ENCODE measurements at regions of chr19 and their contacts with region 1.

Region 1: GRCh38 chr19:10580979-10581631 is 6.0 kb downstream of the AP1M2 start:
- DNase-seq: peak; percentile 95
- ATAC-seq: peak; percentile 92
- H3K4me3 Mint-ChIP-seq: no peak overlapping the region
- H3K27ac Mint-ChIP-seq: no peak overlapping the region
- H3K4me1 Mint-ChIP-seq: peaks cover 32% of the 10 kb centered on the region
- H3K27me3 Mint-ChIP-seq: no peaks in the 10 kb centered on the region

Region 2: GRCh38 chr19:10517760-10518443 is 63.2 kb before region 1 on chr19:
- CTCF ChIA-PET with region 1: no interaction called
- POLR2A ChIA-PET with region 1: no interaction called
- DNase-seq: no peak
- ATAC-seq: peak; percentile 32
- H3K4me3 Mint-ChIP-seq: peak overlapping the region; percentile 53
- H3K27ac Mint-ChIP-seq: no peak overlapping the region
- H3K4me1 Mint-ChIP-seq: peaks cover 44% of the 10 kb centered on the region
- H3K27me3 Mint-ChIP-seq: peaks cover 53% of the 10 kb centered on the region

Region 3: GRCh38 chr19:10593820-10594637 is 12.9 kb after region 1 on chr19:
- CTCF ChIA-PET with region 1: interaction called, 70 read pairs
- POLR2A ChIA-PET with region 1: interaction called, 4 read pairs
- DNase-seq: no peak
- ATAC-seq: no peak
- H3K4me3 Mint-ChIP-seq: no peak overlapping the region
- H3K27ac Mint-ChIP-seq: peak overlapping the region; percentile 76
- H3K4me1 Mint-ChIP-seq: peaks cover 25% of the 10 kb centered on the region
- H3K27me3 Mint-ChIP-seq: peaks cover 2% of the 10 kb centered on the region

Region 4: DNA sequence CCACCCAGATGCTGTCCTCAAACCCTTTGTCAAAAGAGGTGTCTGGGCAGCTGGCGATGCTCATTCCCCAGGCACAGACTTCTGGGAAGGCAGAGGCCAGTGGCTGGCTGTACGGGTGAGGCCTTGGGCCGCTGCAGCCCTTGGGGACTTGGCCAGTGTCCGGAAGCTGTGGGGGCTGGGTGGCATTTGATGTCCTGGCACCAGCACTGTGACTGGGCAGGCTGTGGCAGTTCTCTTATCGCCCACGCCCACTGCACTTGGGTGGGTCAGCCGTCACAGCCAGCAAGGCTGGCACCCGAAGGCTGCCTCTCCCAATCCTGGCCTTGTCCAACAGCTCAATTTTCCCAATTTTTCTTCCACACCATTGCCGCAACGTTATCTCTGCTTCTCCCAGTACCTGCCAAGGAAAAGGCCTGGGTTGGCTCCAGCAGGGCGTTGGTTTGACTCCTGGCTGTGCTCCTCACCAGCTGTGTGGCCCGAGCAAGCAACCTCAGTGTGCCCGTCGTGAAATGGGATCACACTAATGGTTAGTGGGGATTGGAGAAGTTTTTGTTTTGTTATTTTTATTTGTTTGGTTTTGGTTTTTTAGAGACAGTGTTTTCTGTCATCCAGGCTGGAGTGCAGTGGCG is 31.5 kb after region 1 on chr19:
- CTCF ChIA-PET with region 1: interaction called, 14 read pairs
- POLR2A ChIA-PET with region 1: interaction called, 3 read pairs
- DNase-seq: no peak
- ATAC-seq: no peak
- H3K4me3 Mint-ChIP-seq: no peak overlapping the region
- H3K27ac Mint-ChIP-seq: peak overlapping the region; percentile 55
- H3K4me1 Mint-ChIP-seq: peaks cover 26% of the 10 kb centered on the region
- H3K27me3 Mint-ChIP-seq: no peaks in the 10 kb centered on the region

Region 5: GRCh38 chr19:10644260-10645007 is 63.3 kb after region 1 on chr19:
- CTCF ChIA-PET with region 1: interaction called, 421 read pairs
- POLR2A ChIA-PET with region 1: interaction called, 21 read pairs
- DNase-seq: peak; percentile 90
- ATAC-seq: peak; percentile 90
- H3K4me3 Mint-ChIP-seq: no peak overlapping the region
- H3K27ac Mint-ChIP-seq: peak overlapping the region; percentile 89
- H3K4me1 Mint-ChIP-seq: peaks cover 37% of the 10 kb centered on the region
- H3K27me3 Mint-ChIP-seq: no peaks in the 10 kb centered on the region

Region 6: GRCh38 chr19:10662384-10663251 is 81.5 kb after region 1 on chr19:
- CTCF ChIA-PET with region 1: interaction called, 11 read pairs
- POLR2A ChIA-PET with region 1: no interaction called
- DNase-seq: no peak
- ATAC-seq: no peak
- H3K4me3 Mint-ChIP-seq: no peak overlapping the region
- H3K27ac Mint-ChIP-seq: peak overlapping the region; percentile 69
- H3K4me1 Mint-ChIP-seq: peaks cover 48% of the 10 kb centered on the region
- H3K27me3 Mint-ChIP-seq: no peaks in the 10 kb centered on the region

Measured in activated CD8-positive, alpha-beta T cell treated with anti-CD3 and anti-CD28 coated beads, Interleukin-2, amount 10 ng/mL, durations not matched to agents 7 days and 5 days (primary cell).